ENCODE measurements at regions of chr7 and their contacts with region 1.

Region 1: GRCh38 chr7:117873310-117874190 is at the start of gene CTTNBP2:
- DNase-seq: peak; percentile 45 to 77 (median 56)
- ATAC-seq: peak; percentile 35 to 89 (median 70)
- H3K4me3 ChIP-seq: peak within 1 kb of the TSS; percentile 60 to 95 (median 80)
- H3K27ac ChIP-seq: peak within 1 kb of the TSS in 7 of 12 donors; percentile 8 to 70 (median 61)
- H3K4me1 ChIP-seq: peaks cover 0 to 20% (median 0%) of the 10 kb centered on the region in 12 donors
- H3K27me3 ChIP-seq: peaks cover 0 to 51% (median 0%) of the 10 kb centered on the region in 9 donors
- CTCF ChIP-seq: peak in 3 of 12 donors; percentile 21 to 30 (median 22)
- POLR2A ChIP-seq: no peak
- total RNA-seq, gene CTTNBP2: 0.31 to 3.9 (median 0.95) TPM

Region 2: DNA sequence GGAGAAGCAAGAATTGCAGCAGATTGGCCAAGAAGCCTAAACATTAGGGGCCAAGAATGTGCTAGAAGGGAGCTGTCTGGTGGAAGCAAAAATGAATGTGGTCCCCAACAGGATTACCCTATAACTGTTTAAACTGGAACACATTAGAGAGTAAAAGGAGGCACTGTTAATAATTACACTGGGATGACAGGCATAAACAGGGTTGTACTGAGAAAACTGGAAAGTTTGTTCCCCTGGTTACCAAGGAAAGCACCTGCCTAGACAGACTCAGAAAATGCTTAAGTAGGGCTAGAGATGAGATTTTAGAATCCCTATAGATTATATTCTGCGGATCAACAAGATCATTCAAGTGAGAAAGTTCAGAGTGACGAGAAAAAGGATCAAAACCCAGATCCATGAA is 101.1 kb before region 1 on chr7:
- intact Hi-C with region 1: loop called in 1 of 10 experiments (anchors 5 kb)
- DNase-seq: no peak
- ATAC-seq: no peak
- H3K4me3 ChIP-seq: no peak overlapping the region
- H3K27ac ChIP-seq: no peak overlapping the region
- H3K4me1 ChIP-seq: peaks cover 0 to 32% (median 0%) of the 10 kb centered on the region in 12 donors
- H3K27me3 ChIP-seq: no peaks in the 10 kb centered on the region
- CTCF ChIP-seq: no peak
- POLR2A ChIP-seq: no peak

Region 3: DNA sequence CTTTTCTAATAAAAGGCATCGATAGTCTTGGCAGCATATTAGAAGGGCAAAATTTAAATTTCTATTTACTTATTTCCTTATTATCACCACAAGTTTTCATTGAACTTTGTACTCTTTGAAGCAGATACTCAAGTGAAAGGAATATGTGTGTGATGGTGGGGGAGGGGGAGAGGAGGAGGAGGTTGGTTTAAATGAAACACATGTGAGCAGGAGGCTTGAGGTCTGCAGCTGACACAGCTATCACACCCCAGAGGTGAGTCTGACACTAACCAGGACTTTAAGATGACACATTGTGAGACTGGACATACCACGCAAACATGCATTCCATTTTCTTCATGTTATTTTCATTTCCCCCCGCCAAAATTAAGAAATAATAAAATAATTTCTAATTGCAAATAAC is 63.6 kb before region 1 on chr7:
- intact Hi-C with region 1: loop called in 1 of 10 experiments (anchors 10 kb)
- DNase-seq: peak in 2 of 5 donors; percentile 21 to 47
- ATAC-seq: peak in 3 of 4 donors; percentile 76 to 87 (median 78)
- H3K4me3 ChIP-seq: no peak overlapping the region
- H3K27ac ChIP-seq: no peak overlapping the region
- H3K4me1 ChIP-seq: peaks cover 0 to 25% (median 19%) of the 10 kb centered on the region in 12 donors
- H3K27me3 ChIP-seq: no peaks in the 10 kb centered on the region
- CTCF ChIP-seq: no peak
- POLR2A ChIP-seq: no peak

Region 4: GRCh38 chr7:117982071-117983055 is 108.8 kb after region 1 on chr7:
- intact Hi-C with region 1: no loop called
- DNase-seq: no peak
- ATAC-seq: no peak
- H3K4me3 ChIP-seq: no peak overlapping the region
- H3K27ac ChIP-seq: no peak overlapping the region
- H3K4me1 ChIP-seq: no peaks in the 10 kb centered on the region
- H3K27me3 ChIP-seq: no peaks in the 10 kb centered on the region
- CTCF ChIP-seq: no peak
- POLR2A ChIP-seq: no peak